ENCODE measurements at regions of chr3 and their contacts with region 1.

Region 1: GRCh38 chr3:129567176-129567705 is 24.3 kb downstream of the H1-8 start:
- DNase-seq: no peak
- CTCF ChIP-seq: no peak

Region 2: GRCh38 chr3:129553719-129554118 is 13.5 kb before region 1 on chr3:
- CTCF ChIA-PET with region 1: interaction called, 10 read pairs
- POLR2A ChIA-PET with region 1: no interaction called
- DNase-seq: no peak
- CTCF ChIP-seq: no peak

Region 3: DNA sequence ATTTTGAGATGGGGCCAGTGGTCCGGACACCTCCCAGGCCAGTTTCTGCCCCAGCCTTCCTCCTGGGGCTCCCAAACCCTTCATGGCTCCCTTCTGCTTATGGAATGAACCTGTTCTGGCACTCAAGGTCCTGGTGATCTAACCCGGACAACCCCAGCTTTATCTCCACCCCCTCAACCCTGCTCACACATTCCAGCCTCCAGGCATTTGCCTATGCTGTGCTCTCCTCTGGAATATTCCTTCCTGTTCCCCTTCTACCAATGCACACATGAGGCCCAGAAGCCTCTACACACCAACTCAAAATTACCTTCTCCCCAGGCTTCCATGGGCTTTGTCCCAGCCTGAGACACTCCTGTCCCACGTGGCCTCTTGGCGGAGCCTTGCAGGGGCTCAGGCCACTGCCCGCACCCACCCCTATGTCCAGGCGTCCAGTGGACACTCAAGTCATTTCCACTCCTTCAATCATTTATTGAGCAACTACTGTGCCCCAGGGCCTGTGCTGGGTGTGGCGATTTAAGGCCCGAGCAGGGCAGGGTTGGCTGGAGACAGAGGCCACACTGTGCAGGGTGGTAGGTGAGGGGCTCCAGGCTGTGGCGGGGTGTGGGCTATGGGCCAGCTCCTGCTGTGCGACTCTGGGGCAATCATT is 20.4 kb after region 1 on chr3:
- CTCF ChIA-PET with region 1: no interaction called
- POLR2A ChIA-PET with region 1: no interaction called
- DNase-seq: no peak
- CTCF ChIP-seq: no peak

Region 4: GRCh38 chr3:129867506-129868124 is 300.4 kb after region 1 on chr3:
- CTCF ChIA-PET with region 1: no interaction called
- POLR2A ChIA-PET with region 1: no interaction called
- DNase-seq: no peak
- CTCF ChIP-seq: no peak